Activated CD8-positive, alpha-beta T cell treated with anti-CD3 and anti-CD28 coated beads, Interleukin-2, amount 10 ng/mL, durations not matched to agents 7 days and 5 days (primary cell): ENCODE measurements at regions of chr6 and their contacts with region 1.

Region 1: DNA sequence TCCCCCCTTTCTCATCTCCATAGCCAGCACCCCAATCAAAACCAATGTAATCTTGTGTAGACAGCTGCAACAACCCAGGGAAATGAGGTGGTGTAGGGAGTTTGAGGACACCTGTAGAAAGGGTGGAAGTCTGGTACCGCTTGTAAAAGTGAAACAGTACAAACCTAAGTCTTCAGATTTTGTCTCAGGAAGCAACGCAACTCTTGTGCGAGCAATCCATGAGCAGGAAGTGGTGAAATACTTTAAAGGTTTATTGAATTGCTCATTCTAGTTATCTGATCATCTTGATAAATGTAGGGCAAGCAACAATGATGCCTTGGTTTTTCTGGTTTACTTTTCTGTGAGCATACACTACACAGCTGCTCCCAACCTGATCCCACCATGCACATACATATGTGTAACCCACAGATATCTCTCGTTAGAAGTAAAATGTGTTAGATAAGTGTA is 71.1 kb upstream of the THEMIS start:
- DNase-seq: peak; percentile 75
- ATAC-seq: peak; percentile 84
- H3K4me3 Mint-ChIP-seq: peak overlapping the region; percentile 76
- H3K27ac Mint-ChIP-seq: peak overlapping the region; percentile 97
- H3K4me1 Mint-ChIP-seq: peaks cover 76% of the 10 kb centered on the region
- H3K27me3 Mint-ChIP-seq: no peaks in the 10 kb centered on the region

Region 2: GRCh38 chr6:127406122-127406521 is 565.8 kb before region 1 on chr6:
- CTCF ChIA-PET with region 1: no interaction called
- POLR2A ChIA-PET with region 1: no interaction called
- DNase-seq: no peak
- ATAC-seq: no peak
- H3K4me3 Mint-ChIP-seq: no peak overlapping the region
- H3K27ac Mint-ChIP-seq: no peak overlapping the region
- H3K4me1 Mint-ChIP-seq: peaks cover 4% of the 10 kb centered on the region
- H3K27me3 Mint-ChIP-seq: peaks cover 4% of the 10 kb centered on the region

Region 3: GRCh38 chr6:127436578-127437110 is 535.3 kb before region 1 on chr6:
- CTCF ChIA-PET with region 1: no interaction called
- POLR2A ChIA-PET with region 1: no interaction called
- DNase-seq: no peak
- ATAC-seq: no peak
- H3K4me3 Mint-ChIP-seq: no peak overlapping the region
- H3K27ac Mint-ChIP-seq: no peak overlapping the region
- H3K4me1 Mint-ChIP-seq: no peaks in the 10 kb centered on the region
- H3K27me3 Mint-ChIP-seq: peaks cover 8% of the 10 kb centered on the region

Region 4: DNA sequence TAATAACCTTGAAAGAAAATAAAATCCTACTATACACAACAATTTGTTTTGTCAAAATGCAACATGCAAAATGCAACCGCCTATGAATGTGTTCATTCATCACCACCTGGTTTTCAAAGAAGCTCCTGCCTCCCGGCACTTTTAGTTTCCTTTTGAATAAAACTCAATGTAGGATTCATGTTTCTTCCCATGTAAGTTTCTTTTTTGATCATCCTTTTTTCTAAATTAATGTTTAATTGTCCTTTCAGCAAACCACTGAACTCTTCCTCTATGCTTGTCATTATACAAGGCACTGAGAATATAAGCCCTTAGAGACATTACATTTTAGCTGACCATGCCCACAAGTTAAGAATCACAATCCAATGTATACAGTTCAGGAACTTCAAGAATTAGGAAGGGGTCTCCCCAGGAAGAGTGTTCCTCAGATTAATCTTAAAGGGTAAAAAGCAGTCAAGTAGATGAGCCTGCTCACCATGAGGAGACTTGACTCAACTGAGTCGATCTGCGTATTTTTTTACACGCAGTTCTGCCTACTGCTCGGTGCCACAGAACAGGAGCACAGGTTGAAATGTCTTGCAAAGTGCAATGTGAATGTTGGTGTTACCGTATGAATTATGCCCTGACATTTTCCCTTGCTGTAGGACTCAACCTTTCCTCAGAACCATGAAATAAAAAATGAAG is 63.9 kb before region 1 on chr6:
- CTCF ChIA-PET with region 1: interaction called, 16 read pairs
- POLR2A ChIA-PET with region 1: interaction called, 7 read pairs
- DNase-seq: no peak
- ATAC-seq: peak; percentile 59
- H3K4me3 Mint-ChIP-seq: peak overlapping the region; percentile 79
- H3K27ac Mint-ChIP-seq: peak overlapping the region; percentile 84
- H3K4me1 Mint-ChIP-seq: peaks cover 65% of the 10 kb centered on the region
- H3K27me3 Mint-ChIP-seq: no peaks in the 10 kb centered on the region

Region 5: GRCh38 chr6:127918506-127919427 is 53.2 kb before region 1 on chr6:
- CTCF ChIA-PET with region 1: interaction called, 50 read pairs
- POLR2A ChIA-PET with region 1: interaction called, 8 read pairs
- DNase-seq: peak; percentile 56
- ATAC-seq: peak; percentile 69
- H3K4me3 Mint-ChIP-seq: peak overlapping the region; percentile 71
- H3K27ac Mint-ChIP-seq: peak overlapping the region; percentile 85
- H3K4me1 Mint-ChIP-seq: peaks cover 85% of the 10 kb centered on the region
- H3K27me3 Mint-ChIP-seq: no peaks in the 10 kb centered on the region

Region 6: DNA sequence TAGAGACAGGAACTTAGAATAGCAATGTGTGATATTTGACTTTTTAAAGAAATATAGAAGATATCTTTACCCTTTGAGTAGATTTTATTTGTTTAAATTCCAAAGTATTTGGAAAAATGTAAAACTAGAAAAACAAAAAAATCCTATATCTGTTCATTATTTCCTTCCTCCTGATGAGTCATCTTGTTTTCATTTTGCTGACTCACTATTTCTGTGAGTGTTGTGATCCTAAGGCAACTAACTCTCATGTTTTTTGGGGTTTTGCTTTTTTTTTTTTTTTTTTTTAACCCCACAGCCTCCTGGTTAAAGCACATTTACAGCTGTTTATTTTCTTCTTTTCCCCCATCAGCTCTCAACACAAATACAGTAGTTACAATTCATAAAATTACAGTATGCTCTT is 33.3 kb before region 1 on chr6:
- CTCF ChIA-PET with region 1: interaction called, 27 read pairs
- POLR2A ChIA-PET with region 1: interaction called, 32 read pairs
- DNase-seq: no peak
- ATAC-seq: no peak
- H3K4me3 Mint-ChIP-seq: peak overlapping the region; percentile 10
- H3K27ac Mint-ChIP-seq: peak overlapping the region; percentile 65
- H3K4me1 Mint-ChIP-seq: peaks cover 54% of the 10 kb centered on the region
- H3K27me3 Mint-ChIP-seq: no peaks in the 10 kb centered on the region

Region 7: GRCh38 chr6:127951172-127951917 is 20.6 kb before region 1 on chr6:
- CTCF ChIA-PET with region 1: interaction called, 54 read pairs
- POLR2A ChIA-PET with region 1: interaction called, 44 read pairs
- DNase-seq: no peak
- ATAC-seq: peak; percentile 72
- H3K4me3 Mint-ChIP-seq: peak overlapping the region; percentile 55
- H3K27ac Mint-ChIP-seq: peak overlapping the region; percentile 94
- H3K4me1 Mint-ChIP-seq: peaks cover 74% of the 10 kb centered on the region
- H3K27me3 Mint-ChIP-seq: no peaks in the 10 kb centered on the region

Region 8: DNA sequence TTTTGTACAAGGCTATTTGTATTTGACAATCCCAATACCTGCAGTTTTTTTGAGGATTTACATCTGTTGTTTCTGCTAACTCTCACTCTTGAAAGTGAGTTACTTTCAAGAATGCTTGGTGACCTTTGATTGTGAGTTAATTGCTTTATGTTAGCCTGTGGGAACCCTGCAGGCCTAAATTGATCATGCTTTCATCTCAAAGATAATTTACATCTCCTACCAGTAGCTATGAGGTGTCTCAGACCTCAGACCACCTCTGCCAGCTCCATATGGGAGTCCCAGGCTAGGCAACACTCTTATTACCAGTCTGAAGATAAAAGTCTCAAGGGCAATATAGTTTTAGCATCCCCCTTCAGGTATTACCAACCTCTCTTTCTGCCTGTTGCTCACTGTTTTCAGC is 45.3 kb after region 1 on chr6:
- CTCF ChIA-PET with region 1: no interaction called
- POLR2A ChIA-PET with region 1: no interaction called
- DNase-seq: no peak
- ATAC-seq: no peak
- H3K4me3 Mint-ChIP-seq: no peak overlapping the region
- H3K27ac Mint-ChIP-seq: no peak overlapping the region
- H3K4me1 Mint-ChIP-seq: peaks cover 4% of the 10 kb centered on the region
- H3K27me3 Mint-ChIP-seq: no peaks in the 10 kb centered on the region

Region 9: DNA sequence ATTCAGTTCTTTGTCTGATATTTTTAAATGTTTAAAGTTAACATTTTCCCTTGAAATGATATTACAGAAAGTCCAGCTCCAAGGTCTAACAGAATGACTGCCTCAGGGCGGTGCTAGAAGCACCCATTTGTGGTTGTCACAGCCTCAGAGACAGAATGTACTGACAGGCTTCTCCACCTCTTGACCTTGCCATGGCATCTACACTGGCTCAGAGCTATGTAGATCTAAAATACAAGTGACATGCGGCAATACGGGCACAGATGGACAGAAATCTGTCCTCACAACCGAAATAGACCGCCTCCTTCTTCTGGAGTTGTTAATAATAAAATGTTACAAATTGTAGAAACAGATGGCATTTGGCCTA is 96.1 kb after region 1 on chr6:
- CTCF ChIA-PET with region 1: no interaction called
- POLR2A ChIA-PET with region 1: no interaction called
- DNase-seq: no peak
- ATAC-seq: no peak
- H3K4me3 Mint-ChIP-seq: no peak overlapping the region
- H3K27ac Mint-ChIP-seq: no peak overlapping the region
- H3K4me1 Mint-ChIP-seq: no peaks in the 10 kb centered on the region
- H3K27me3 Mint-ChIP-seq: no peaks in the 10 kb centered on the region